CD8-positive, alpha-beta T cell (primary cell): ENCODE measurements at regions of chr17 and their contacts with region 1.

Region 1: DNA sequence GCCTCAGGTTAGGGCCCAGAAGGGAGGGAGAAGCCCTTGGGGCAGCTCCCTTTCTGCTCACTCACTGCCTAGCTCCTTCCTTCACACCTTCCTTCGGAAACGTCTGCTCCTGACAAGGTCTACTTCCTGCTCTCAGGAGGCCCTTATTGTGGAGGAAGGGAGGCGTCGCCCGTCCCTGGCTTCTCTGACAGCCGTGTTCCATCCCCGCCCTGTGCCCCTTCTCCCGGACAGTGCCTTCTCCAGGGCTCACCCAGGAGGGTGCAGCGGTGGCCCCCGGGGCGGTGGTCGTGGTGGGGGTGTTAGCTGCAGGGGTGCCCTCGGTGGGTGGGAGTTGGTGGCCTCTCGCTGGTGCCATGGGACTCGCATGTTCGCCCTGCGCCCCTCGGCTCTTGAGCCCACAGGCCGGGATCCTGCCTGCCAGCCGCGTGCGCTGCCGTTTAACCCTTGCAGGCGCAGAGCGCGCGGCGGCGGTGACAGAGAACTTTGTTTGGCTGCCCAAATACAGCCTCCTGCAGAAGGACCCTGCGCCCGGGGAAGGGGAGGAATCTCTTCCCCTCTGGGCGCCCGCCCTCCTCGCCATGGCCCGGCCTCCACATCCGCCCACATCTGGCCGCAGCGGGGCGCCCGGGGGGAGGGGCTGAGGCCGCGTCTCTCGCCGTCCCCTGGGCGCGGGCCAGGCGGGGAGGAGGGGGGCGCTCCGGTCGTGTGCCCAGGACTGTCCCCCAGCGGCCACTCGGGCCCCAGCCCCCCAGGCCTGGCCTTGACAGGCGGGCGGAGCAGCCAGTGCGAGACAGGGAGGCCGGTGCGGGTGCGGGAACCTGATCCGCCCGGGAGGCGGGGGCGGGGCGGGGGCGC is 231.9 kb downstream of the SEC14L1 start:
- DNase-seq: peak; percentile 21 to 84 (median 61)
- ATAC-seq: peak; percentile 33
- H3K4me3 ChIP-seq: peak overlapping the region; percentile 68 to 99
- H3K4me3 Mint-ChIP-seq: peak overlapping the region; percentile 81
- H3K27ac ChIP-seq: peak overlapping the region; percentile 66 to 81
- H3K27ac Mint-ChIP-seq: peak overlapping the region; percentile 89
- H3K4me1 ChIP-seq: peaks cover 59% of the 10 kb centered on the region
- H3K4me1 Mint-ChIP-seq: peaks cover 56% of the 10 kb centered on the region
- H3K27me3 ChIP-seq: no peaks in the 10 kb centered on the region
- H3K27me3 Mint-ChIP-seq: no peaks in the 10 kb centered on the region
- CTCF ChIP-seq: no peak

Region 2: DNA sequence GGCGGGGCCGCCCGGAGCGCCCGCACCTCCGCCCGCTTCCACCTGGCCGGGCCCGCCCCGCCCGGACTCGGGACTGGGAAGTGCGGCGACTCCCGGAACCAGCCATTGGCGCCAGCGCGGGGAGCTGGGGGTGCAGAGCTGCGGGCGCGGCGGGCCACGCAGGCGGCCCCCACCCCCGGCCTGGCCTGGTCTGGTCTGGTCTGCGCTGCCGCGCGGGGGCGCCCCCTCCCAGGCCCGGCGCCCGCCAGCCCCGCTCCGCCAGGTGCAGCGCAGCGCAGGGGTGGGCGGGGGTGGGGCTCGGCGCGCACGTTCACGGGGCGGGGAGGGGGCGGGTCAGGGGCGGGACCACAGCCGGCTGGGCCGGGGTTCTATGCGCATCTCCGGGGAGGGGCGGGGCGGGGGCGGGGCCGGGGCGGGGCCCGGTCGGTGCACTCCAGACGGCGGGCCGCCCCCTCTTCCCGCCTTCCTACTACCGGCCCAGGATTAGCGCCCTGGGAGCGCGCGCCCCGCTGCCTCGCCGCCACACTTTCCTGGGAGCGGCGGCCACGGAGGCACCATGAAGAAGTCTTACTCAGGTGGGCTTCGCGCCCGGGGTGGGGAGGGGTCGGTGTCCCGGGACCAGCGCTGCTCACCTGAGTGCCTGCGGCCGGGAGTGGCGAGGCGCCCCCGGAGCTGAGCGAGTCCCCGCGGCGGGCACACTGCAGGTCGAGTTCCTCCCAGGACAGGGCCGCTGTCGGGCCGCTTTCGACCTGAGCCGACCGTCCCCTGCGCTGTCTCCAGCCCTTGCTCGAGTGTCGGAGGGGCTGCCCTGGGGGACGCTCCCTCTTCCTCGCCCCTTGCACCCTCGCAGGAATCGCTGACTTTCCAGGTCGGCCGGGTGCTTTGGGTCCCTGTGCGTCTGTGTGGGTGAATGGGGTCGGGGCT is 91.4 kb before region 1 on chr17:
- CTCF ChIA-PET with region 1: no interaction called
- POLR2A ChIA-PET with region 1: no interaction called
- intact Hi-C with region 1: loop called (anchors 5 kb)
- DNase-seq: peak; percentile 24 to 85 (median 63)
- ATAC-seq: peak; percentile 97
- H3K4me3 ChIP-seq: peak overlapping the region; percentile 39 to 68
- H3K4me3 Mint-ChIP-seq: peak overlapping the region; percentile 77
- H3K27ac ChIP-seq: no peak overlapping the region
- H3K27ac Mint-ChIP-seq: peak overlapping the region; percentile 70
- H3K4me1 ChIP-seq: peaks cover 11% of the 10 kb centered on the region
- H3K4me1 Mint-ChIP-seq: peaks cover 6% of the 10 kb centered on the region
- H3K27me3 ChIP-seq: peaks cover 7 to 8% of the 10 kb centered on the region in 2 experiments
- H3K27me3 Mint-ChIP-seq: peaks cover 10% of the 10 kb centered on the region
- CTCF ChIP-seq: no peak

Region 3: GRCh38 chr17:77356109-77356689 is 16.5 kb before region 1 on chr17:
- CTCF ChIA-PET with region 1: interaction called, 11 read pairs
- POLR2A ChIA-PET with region 1: interaction called, 6 read pairs
- intact Hi-C with region 1: no loop called
- DNase-seq: peak in 1 of 9 experiments; percentile 44
- ATAC-seq: peak; percentile 26
- H3K4me3 ChIP-seq: no peak overlapping the region
- H3K4me3 Mint-ChIP-seq: no peak overlapping the region
- H3K27ac ChIP-seq: no peak overlapping the region
- H3K27ac Mint-ChIP-seq: no peak overlapping the region
- H3K4me1 ChIP-seq: peaks cover 8% of the 10 kb centered on the region
- H3K4me1 Mint-ChIP-seq: peaks cover 23% of the 10 kb centered on the region
- H3K27me3 ChIP-seq: no peaks in the 10 kb centered on the region
- H3K27me3 Mint-ChIP-seq: no peaks in the 10 kb centered on the region
- CTCF ChIP-seq: no peak

Region 4: GRCh38 chr17:77391668-77392375 is 19.2 kb after region 1 on chr17:
- CTCF ChIA-PET with region 1: interaction called, 29 read pairs
- POLR2A ChIA-PET with region 1: interaction called, 54 read pairs
- intact Hi-C with region 1: loop called in 1 of 2 experiments (anchors 1 kb)
- DNase-seq: peak in 6 of 9 experiments; percentile 34 to 78 (median 54)
- ATAC-seq: peak; percentile 46
- H3K4me3 ChIP-seq: no peak overlapping the region
- H3K4me3 Mint-ChIP-seq: peak overlapping the region; percentile 54
- H3K27ac ChIP-seq: peak overlapping the region in 1 of 2 experiments; percentile 7
- H3K27ac Mint-ChIP-seq: peak overlapping the region; percentile 84
- H3K4me1 ChIP-seq: peaks cover 83% of the 10 kb centered on the region
- H3K4me1 Mint-ChIP-seq: peaks cover 79% of the 10 kb centered on the region
- H3K27me3 ChIP-seq: no peaks in the 10 kb centered on the region
- H3K27me3 Mint-ChIP-seq: no peaks in the 10 kb centered on the region
- CTCF ChIP-seq: no peak

Region 5: DNA sequence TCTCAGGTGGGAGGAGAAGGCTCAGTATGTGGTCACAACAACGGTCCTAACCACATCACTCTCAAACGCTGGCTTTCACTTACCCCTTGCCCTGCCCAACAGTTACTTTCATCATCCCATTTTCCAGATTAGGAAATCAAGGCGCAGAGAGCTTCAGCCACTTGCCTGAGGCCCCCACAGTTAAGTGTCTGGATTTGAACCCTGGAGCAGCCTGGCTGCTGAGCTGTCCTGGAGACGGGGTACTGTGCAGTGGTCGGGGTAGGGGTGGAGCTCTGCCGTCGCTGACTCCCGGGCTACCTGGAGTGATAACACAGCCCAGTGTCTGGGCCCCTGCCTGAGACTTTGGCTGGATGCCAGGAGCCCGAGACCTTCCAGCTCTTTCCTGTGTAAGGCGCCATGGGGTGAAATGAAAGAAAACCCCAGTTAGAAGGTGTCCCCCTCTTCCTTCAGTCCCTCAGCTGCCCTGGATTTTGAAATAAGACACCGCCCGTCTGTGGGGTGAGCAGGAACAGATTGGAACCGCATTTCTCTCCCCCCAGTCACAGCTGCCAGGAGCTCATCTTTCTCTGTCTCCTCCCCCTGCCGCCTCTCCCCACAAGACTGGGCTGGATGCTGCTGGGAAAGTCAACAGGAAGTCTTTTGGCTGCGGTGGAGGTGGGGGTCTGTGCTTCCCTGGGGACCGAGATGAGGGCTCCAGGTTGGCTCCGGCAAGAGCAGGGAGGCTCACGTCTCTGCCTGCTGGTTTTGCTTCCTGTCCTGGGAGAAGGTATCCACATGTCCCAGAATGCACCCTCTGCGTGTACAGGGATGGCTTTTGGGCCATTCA is 48.3 kb after region 1 on chr17:
- CTCF ChIA-PET with region 1: interaction called, 13 read pairs
- POLR2A ChIA-PET with region 1: interaction called, 11 read pairs
- intact Hi-C with region 1: no loop called
- DNase-seq: peak in 8 of 9 experiments; percentile 39 to 79 (median 70)
- ATAC-seq: peak; percentile 62
- H3K4me3 ChIP-seq: peak overlapping the region; percentile 12 to 28
- H3K4me3 Mint-ChIP-seq: peak overlapping the region; percentile 65
- H3K27ac ChIP-seq: peak overlapping the region; percentile 22 to 57
- H3K27ac Mint-ChIP-seq: peak overlapping the region; percentile 91
- H3K4me1 ChIP-seq: peaks cover 75% of the 10 kb centered on the region
- H3K4me1 Mint-ChIP-seq: peaks cover 67% of the 10 kb centered on the region
- H3K27me3 ChIP-seq: no peaks in the 10 kb centered on the region
- H3K27me3 Mint-ChIP-seq: no peaks in the 10 kb centered on the region
- CTCF ChIP-seq: no peak

Region 6: DNA sequence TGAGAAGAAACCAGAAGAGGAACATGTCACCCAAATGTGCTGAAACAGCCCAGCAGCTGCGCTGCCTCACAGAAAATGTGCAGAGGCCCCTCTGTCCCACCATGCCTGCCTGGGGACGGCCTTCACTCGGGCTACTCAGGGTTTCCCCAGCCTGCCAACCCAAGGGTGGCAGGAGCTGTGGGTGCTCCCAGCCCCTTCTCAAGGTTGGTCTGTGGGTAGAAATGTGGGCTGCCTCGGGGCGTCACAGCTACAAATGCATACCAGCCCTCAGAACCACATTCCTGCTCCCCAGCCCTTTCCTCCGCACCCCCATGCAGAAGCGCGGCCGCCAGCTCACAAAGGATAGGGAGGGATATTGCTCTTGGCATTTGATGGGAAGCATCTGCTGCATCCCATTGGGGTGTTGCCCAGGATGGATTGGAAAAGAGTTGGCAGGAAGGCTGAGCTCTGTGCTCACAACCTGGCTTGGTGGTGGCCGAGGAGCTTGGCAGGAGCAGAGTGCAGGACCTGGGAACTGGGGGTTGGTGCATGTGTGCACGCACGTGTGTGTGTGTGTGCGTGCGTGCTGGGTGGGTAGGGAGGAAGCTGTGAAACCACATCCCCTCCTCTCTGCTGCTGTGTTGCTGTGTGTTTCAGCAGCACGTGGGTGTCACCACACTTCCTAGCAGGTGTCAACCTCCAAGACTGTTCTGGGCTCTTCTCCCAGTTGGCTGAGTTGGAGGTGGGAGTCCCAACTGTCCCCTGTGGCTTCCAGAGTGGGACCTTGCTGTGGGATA is 72.5 kb after region 1 on chr17:
- CTCF ChIA-PET with region 1: interaction called, 5 read pairs
- POLR2A ChIA-PET with region 1: interaction called, 14 read pairs
- intact Hi-C with region 1: loop called in 1 of 2 experiments (anchors 5 kb)
- DNase-seq: peak; percentile 75 to 99 (median 85)
- ATAC-seq: peak; percentile 62
- H3K4me3 ChIP-seq: peak overlapping the region; percentile 32 to 38
- H3K4me3 Mint-ChIP-seq: peak overlapping the region; percentile 82
- H3K27ac ChIP-seq: peak overlapping the region; percentile 64 to 72
- H3K27ac Mint-ChIP-seq: peak overlapping the region; percentile 97
- H3K4me1 ChIP-seq: peaks cover 92% of the 10 kb centered on the region
- H3K4me1 Mint-ChIP-seq: peaks cover 90% of the 10 kb centered on the region
- H3K27me3 ChIP-seq: no peaks in the 10 kb centered on the region
- H3K27me3 Mint-ChIP-seq: no peaks in the 10 kb centered on the region
- CTCF ChIP-seq: no peak